AG04450 (cell line): ENCODE measurements at regions of chr3 and their contacts with region 1.

Region 1: GRCh38 chr3:113495035-113495434 is 19.9 kb downstream of the SPICE1 start:
- DNase-seq: no peak
- H3K4me3 ChIP-seq: no peak overlapping the region
- H3K27ac ChIP-seq: no peak overlapping the region
- H3K27me3 ChIP-seq: no peaks in the 10 kb centered on the region
- CTCF ChIP-seq: peak; percentile 53

Region 2: DNA sequence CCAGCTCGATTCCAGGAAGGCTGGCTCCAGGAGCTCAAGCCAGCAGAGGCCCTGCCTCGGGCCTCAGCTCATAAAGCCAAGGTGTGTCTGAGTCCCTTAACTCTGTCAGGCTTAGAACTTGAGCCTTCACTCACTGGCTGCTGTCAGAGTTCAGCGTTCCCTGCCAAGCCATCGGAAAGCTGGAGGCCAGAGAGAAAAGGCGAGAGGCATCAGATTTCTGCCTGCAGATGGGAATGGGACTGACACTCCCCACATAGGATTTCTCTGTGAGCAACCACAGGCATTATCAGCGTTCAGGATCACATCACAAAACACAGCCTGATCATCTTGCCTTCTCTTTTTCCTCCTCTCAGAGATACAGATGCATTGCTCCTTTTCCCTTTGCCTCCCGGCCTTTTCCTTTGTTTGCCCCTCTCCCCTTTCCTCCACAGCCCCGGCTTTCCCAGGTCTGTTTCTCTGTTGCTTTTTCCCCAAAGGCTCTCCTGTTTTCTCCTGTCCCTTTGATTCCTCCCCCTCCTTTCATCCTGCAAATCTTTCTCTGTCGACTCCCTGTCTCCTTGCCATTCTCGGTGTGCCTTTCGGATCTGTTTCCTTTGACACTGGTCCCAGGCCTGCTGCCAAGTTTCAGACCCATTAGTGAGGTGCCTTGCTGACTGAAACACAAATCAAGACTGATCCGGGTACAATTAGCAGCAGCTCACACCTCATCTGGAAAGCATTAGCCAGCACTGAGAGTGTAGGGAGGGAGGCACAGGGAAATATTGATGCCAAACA is 328.1 kb before region 1 on chr3:
- CTCF ChIA-PET with region 1: no interaction called
- POLR2A ChIA-PET with region 1: no interaction called
- DNase-seq: peak; percentile 16
- H3K4me3 ChIP-seq: no peak overlapping the region
- H3K27ac ChIP-seq: peak overlapping the region; percentile 68
- H3K27me3 ChIP-seq: peaks cover 2% of the 10 kb centered on the region
- CTCF ChIP-seq: no peak

Region 3: DNA sequence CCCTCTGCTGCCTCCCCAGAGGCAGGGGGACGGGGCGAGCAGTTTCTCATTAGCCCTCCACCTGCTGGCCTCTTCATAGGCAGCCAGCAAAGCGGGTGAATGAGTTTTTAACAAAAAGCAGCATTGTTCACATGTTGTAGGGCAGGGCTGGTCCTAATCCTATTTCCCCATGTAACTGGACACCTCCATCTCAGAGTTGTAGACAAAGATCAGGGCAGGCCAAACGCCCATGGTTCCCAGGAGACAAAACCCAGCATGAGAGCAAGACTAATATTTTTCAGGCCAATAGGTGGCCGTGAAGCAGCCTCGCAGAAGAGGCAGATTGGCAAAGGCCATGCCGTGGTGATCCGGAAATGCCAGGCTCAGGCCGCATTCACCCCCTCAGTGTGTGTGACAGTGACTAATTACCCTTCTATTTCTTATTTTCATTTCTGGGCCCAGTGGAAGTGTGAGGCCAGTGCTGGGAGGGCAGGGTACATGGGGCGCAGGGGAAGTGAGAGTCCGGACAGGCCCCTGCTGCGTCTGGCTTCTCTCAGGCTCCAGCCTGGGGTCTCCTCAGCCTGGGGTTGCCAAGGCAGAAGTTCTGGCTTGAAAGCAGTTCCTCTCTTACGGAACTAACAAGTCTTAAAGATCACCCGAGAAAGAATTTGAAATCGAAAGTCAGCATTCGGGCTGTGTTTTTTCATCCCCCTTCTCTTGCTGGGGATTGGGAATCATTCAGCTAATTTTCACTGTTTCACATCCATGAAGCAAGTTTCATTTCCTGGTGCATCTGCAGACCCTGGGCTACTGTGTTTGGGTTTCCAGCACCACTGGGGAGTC is 218.9 kb before region 1 on chr3:
- CTCF ChIA-PET with region 1: no interaction called
- POLR2A ChIA-PET with region 1: no interaction called
- DNase-seq: no peak
- H3K4me3 ChIP-seq: peak overlapping the region; percentile 45
- H3K27ac ChIP-seq: peak overlapping the region; percentile 61
- H3K27me3 ChIP-seq: no peaks in the 10 kb centered on the region
- CTCF ChIP-seq: 0 out of 2 replicates have a peak, but pooled peaks have one; percentile 25

Region 4: DNA sequence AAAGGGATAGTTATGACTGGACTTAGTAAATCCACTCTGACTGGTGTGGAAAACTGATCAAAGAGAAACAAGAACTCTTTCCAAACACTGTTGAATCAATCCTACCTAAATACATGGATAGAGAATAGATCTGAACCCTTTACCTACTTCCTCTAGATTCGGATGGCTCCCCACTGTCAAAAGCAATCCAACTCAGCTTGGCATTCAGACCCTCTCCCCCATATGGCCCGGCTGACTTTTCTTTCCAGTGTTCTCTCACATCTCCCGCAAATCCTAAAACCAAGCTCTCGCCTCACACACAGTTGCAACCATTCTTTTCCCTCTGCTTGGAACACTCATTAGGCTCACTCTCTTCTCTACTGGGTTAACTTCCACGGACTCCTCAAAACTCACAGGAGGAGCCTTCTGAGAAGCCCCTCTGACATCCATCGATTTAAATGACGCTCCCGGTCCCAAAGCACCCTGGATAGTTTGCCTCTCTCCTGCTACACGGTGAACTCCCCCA is 19.3 kb after region 1 on chr3:
- CTCF ChIA-PET with region 1: interaction called, 9 read pairs
- POLR2A ChIA-PET with region 1: interaction called, 20 read pairs
- DNase-seq: no peak
- H3K4me3 ChIP-seq: peak overlapping the region; percentile 88
- H3K27ac ChIP-seq: peak overlapping the region; percentile 96
- H3K27me3 ChIP-seq: no peaks in the 10 kb centered on the region
- CTCF ChIP-seq: no peak

Region 5: DNA sequence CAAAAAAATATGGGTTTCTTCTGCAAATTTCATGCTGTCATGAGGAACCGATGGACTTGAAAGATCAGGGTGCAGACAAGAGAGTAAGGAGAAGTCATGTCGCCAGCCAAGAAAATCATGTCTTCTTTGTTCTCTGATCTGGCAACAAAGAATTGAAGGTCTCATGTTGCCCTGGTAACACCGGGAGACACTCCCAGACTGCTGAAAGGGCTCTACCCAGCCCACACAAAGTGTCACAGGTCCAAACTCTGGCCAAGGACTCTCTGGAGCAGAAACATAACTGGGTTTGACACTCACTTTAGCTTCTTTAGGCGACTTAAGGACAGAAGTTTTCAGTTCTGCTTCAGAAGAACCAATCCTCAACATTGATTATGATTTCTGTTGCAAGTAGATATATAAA is 80.2 kb after region 1 on chr3:
- CTCF ChIA-PET with region 1: interaction called, 63 read pairs
- POLR2A ChIA-PET with region 1: interaction called, 3 read pairs
- DNase-seq: no peak
- H3K4me3 ChIP-seq: no peak overlapping the region
- H3K27ac ChIP-seq: no peak overlapping the region
- H3K27me3 ChIP-seq: peaks cover 13% of the 10 kb centered on the region
- CTCF ChIP-seq: no peak

Region 6: DNA sequence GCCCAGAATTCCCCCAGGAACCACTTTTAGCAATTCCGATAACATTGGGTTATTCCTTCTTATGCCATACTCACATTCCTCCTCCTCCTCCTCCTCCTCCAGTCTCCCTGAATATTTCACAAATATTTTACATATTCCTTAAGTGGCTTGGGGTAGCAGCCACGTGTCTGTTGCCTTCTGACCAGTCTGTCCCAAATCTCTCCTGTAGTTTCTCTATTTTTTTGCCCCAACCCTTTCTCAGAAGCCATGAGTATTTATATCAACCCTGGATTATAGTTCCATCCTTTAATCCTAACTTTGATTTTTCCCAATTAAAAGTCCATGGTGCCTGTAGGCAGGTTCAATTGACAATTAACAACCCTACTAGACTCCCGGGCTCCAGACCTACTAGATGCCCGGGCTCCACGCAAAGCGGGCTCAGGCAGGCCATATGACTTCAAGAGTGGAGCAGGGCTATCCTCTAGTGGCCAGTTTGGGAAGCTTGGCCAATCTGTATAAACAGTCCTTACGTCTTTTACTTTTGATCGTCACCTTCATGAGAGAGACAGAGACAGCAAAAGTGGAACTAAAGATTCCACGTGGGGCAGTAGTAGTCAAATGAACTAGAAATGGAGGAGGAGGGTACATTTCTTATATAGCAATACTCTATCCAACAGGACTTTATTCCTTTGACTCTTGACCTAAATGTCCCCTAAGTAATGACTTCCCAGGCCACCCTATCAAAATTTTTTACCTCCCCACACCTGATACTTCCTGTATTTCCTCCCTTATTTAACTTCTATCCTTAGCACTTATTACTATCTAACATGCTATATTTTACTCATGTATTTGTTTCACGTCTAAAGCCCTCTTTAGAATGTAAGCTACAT is 131.7 kb after region 1 on chr3:
- CTCF ChIA-PET with region 1: interaction called, 29 read pairs
- POLR2A ChIA-PET with region 1: no interaction called
- DNase-seq: peak; percentile 7
- H3K4me3 ChIP-seq: 0 out of 2 replicates have a peak overlapping the region, but pooled peaks have one; percentile 17
- H3K27ac ChIP-seq: no peak overlapping the region
- H3K27me3 ChIP-seq: peaks cover 7% of the 10 kb centered on the region
- CTCF ChIP-seq: peak; percentile 96

Region 7: DNA sequence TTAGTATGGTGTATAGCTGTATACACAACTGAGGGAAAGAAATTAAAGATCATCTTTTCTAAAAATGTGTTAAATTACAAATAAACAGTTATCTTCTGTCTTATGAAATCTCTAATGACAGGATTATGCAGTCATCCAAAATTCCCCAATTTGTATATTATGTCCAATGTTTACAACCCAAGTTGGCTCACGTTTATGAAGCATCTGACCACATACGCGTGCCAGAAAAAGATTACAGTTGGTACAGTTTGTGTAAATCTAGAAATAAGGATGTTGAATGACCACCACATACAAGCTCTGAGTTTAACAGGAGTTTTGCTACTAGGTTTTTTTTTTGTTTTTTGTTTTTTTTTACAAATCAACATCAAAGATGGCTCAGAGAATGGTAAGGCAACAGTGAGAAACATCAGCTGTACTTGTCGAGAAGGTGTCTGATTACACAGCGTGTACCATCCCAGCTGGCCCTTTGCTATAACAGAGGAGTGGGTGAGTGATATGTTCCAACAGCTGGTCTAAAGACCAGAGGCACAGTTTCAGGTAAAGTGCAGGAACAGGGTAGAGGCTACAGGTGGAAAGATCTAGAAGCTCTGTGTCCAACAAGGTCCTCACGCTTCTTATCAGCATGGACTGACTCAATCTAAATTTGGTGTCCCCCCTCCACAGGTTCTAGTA is 154.3 kb after region 1 on chr3:
- CTCF ChIA-PET with region 1: no interaction called
- POLR2A ChIA-PET with region 1: no interaction called
- DNase-seq: no peak
- H3K4me3 ChIP-seq: no peak overlapping the region
- H3K27ac ChIP-seq: no peak overlapping the region
- H3K27me3 ChIP-seq: no peaks in the 10 kb centered on the region
- CTCF ChIP-seq: no peak

Region 8: DNA sequence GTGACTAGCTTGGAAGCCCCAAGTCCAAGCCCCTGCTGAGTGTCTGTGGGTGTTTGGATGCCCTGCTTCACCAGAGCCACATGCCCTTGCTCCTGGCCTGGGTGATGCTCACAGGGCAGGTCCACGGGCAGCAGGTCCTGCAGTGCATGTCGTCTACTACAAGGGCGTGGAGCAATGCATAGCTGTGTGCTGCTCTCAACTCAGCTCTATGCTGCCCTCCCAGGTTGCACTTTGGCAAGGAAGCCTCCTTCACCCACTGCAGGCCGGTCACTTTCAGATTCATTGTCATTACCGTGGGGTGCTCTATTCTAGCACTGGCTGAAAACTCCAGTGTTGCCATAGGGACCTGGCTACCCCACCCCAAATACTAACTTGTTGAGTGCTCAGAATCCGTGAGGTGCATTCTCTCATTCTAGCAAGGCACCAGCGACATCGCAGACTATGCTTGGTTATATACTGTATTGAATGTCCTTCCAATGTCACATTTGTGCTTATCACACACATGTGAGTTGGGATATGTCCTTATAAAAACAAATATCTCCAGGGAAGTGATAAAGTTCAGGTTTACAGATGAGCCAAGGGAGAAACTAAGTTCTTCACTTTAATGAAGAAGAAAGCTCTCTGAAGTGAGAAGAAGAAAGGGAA is 395.3 kb after region 1 on chr3:
- CTCF ChIA-PET with region 1: no interaction called
- POLR2A ChIA-PET with region 1: no interaction called
- DNase-seq: no peak
- H3K4me3 ChIP-seq: no peak overlapping the region
- H3K27ac ChIP-seq: no peak overlapping the region
- H3K27me3 ChIP-seq: no peaks in the 10 kb centered on the region
- CTCF ChIP-seq: no peak